CD4-positive, alpha-beta T cell (primary cell): ENCODE measurements at regions of chrX and their contacts with region 1.

Region 1: GRCh38 chrX:49043220-49043986 is at the start of gene TFE3:
- DNase-seq: peak; percentile 87 to 99 (median 93)
- ATAC-seq: peak; percentile 86
- H3K4me3 ChIP-seq: peak within 1 kb of the TSS; percentile 66
- H3K4me3 Mint-ChIP-seq: peak within 1 kb of the TSS; percentile 96
- H3K27ac ChIP-seq: peak within 1 kb of the TSS; percentile 84 to 88
- H3K27ac Mint-ChIP-seq: peak within 1 kb of the TSS; percentile 94
- H3K4me1 ChIP-seq: peaks cover 42% of the 10 kb centered on the region
- H3K4me1 Mint-ChIP-seq: peaks cover 39% of the 10 kb centered on the region
- H3K27me3 ChIP-seq: no peaks in the 10 kb centered on the region
- H3K27me3 Mint-ChIP-seq: no peaks in the 10 kb centered on the region
- CTCF ChIP-seq: peak; percentile 41
- total RNA-seq, gene TFE3: 38.6 to 40.9 TPM

Region 2: GRCh38 chrX:48539345-48540027 is 503.9 kb before region 1 on chrX and contains the start of gene TBC1D25:
- CTCF ChIA-PET with region 1: no interaction called
- POLR2A ChIA-PET with region 1: no interaction called
- intact Hi-C with region 1: no loop called
- DNase-seq: peak; percentile 89 to 99 (median 96)
- ATAC-seq: peak; percentile 87
- H3K4me3 ChIP-seq: peak within 1 kb of the TSS; percentile 74
- H3K4me3 Mint-ChIP-seq: peak within 1 kb of the TSS; percentile 93
- H3K27ac ChIP-seq: peak within 1 kb of the TSS; percentile 84 to 95
- H3K27ac Mint-ChIP-seq: peak within 1 kb of the TSS; percentile 97
- H3K4me1 ChIP-seq: peaks cover 21% of the 10 kb centered on the region
- H3K4me1 Mint-ChIP-seq: peaks cover 20% of the 10 kb centered on the region
- H3K27me3 ChIP-seq: no peaks in the 10 kb centered on the region
- H3K27me3 Mint-ChIP-seq: no peaks in the 10 kb centered on the region
- CTCF ChIP-seq: peak; percentile 30
- total RNA-seq, gene TBC1D25: 26.7 to 30.5 TPM

Region 3: DNA sequence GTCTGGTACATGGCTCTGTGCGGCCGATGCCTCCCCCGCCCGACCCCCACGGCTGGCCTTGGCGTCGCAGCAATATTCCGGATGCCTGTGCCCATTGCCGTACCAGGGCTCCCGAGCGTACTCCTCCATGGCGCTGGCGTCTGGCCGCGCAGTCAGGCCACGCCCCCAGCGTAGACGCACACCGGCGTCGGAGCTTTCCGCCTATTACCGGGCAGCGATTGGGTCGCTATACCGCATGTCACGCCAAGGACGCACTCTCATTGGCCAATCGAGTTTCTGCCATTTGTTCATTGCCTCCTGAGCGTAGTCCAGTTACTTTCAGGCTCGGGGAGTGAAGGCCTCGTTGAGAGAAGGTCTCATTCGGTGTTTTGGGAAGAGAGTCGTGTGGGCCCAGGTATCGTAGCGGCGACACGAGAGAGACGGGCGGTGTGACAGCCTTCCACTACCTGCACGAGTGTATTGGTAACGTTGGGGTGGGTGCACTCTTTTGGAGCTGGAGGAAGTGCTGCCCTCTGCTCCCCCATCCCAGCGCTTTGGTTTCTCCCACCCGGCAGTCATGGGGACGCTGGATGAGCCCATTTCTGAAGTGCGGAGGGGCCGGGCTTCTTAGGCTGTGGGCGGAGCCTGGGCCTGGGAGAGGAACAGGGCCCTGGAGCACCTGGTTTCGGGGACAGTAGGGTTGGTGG is 145.6 kb before region 1 on chrX and contains the starts of genes PQBP1 and TIMM17B:
- CTCF ChIA-PET with region 1: no interaction called
- POLR2A ChIA-PET with region 1: interaction called, 4 read pairs
- intact Hi-C with region 1: loop called (anchors 5 kb)
- DNase-seq: peak; percentile 73 to 96 (median 84)
- ATAC-seq: peak; percentile 84
- H3K4me3 ChIP-seq: peak within 1 kb of the TSS; percentile 91
- H3K4me3 Mint-ChIP-seq: peak within 1 kb of the TSS; percentile 91
- H3K27ac ChIP-seq: peak within 1 kb of the TSS; percentile 93 to 98
- H3K27ac Mint-ChIP-seq: peak within 1 kb of the TSS; percentile 90
- H3K4me1 ChIP-seq: peaks cover 33% of the 10 kb centered on the region
- H3K4me1 Mint-ChIP-seq: peaks cover 27% of the 10 kb centered on the region
- H3K27me3 ChIP-seq: no peaks in the 10 kb centered on the region
- H3K27me3 Mint-ChIP-seq: no peaks in the 10 kb centered on the region
- CTCF ChIP-seq: no peak
- total RNA-seq, gene PQBP1: 73.0 to 76.6 TPM
- total RNA-seq, gene TIMM17B: 40.0 to 40.3 TPM

Region 4: DNA sequence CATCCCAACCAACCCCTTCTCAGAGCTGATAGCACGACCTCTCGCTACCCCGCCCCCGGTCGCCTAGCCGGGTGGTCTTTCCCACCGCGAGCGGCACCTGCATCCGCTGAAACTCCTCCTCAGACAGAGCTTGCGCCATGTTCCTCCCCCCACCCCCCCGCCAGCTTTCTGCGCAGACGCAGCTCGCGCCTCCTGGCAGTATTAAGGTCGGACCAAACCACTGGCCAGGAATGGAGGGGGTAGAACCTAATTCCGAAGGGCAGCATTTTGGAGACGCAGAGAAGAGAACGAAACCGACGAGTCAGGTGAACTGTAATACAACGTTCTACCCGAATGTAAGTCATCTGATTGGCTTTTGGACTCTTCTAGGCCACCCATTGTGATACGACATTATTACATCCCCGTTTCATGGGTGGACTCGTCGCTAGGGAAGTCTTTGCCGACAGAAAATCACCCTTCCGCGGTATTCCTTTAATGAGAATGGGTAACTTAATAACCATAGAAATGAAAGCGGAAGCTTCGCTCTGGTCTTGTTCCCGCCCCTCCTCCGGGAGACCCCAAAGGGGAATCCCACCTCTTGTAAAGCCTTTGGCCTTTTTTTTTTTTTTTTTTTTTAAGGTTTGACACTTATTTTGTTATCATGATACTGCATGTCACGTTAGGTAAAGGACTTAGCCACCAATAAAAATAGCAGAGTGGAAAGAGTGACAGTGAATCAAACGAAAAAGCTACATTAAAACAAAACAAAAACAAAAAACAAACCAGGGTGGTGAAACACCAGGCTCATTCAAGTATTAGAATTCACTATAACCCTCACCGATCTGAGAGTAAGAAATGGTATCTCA is 41.1 kb before region 1 on chrX and contains the start of gene GRIPAP1:
- CTCF ChIA-PET with region 1: no interaction called
- POLR2A ChIA-PET with region 1: interaction called, 30 read pairs
- intact Hi-C with region 1: loop called (anchors 2 kb)
- DNase-seq: peak; percentile 61 to 93 (median 72)
- ATAC-seq: peak; percentile 77
- H3K4me3 ChIP-seq: peak within 1 kb of the TSS; percentile 93
- H3K4me3 Mint-ChIP-seq: peak within 1 kb of the TSS; percentile 96
- H3K27ac ChIP-seq: peak within 1 kb of the TSS; percentile 84 to 96
- H3K27ac Mint-ChIP-seq: peak within 1 kb of the TSS; percentile 98
- H3K4me1 ChIP-seq: peaks cover 27% of the 10 kb centered on the region
- H3K4me1 Mint-ChIP-seq: peaks cover 26% of the 10 kb centered on the region
- H3K27me3 ChIP-seq: no peaks in the 10 kb centered on the region
- H3K27me3 Mint-ChIP-seq: no peaks in the 10 kb centered on the region
- CTCF ChIP-seq: no peak
- total RNA-seq, gene GRIPAP1: 100 to 101 TPM

Region 5: GRCh38 chrX:49067283-49068120 is 24.1 kb after region 1 on chrX:
- CTCF ChIA-PET with region 1: no interaction called
- POLR2A ChIA-PET with region 1: no interaction called
- intact Hi-C with region 1: no loop called
- DNase-seq: no peak
- ATAC-seq: no peak
- H3K4me3 ChIP-seq: no peak overlapping the region
- H3K4me3 Mint-ChIP-seq: no peak overlapping the region
- H3K27ac ChIP-seq: no peak overlapping the region
- H3K27ac Mint-ChIP-seq: no peak overlapping the region
- H3K4me1 ChIP-seq: peaks cover under 1% of the 10 kb centered on the region
- H3K4me1 Mint-ChIP-seq: no peaks in the 10 kb centered on the region
- H3K27me3 ChIP-seq: no peaks in the 10 kb centered on the region
- H3K27me3 Mint-ChIP-seq: no peaks in the 10 kb centered on the region
- CTCF ChIP-seq: no peak

Region 6: GRCh38 chrX:49079489-49080428 is 36.4 kb after region 1 on chrX and contains the start of gene WDR45:
- CTCF ChIA-PET with region 1: interaction called, 3 read pairs
- POLR2A ChIA-PET with region 1: interaction called, 14 read pairs
- intact Hi-C with region 1: loop called (anchors 2 to 5 kb)
- DNase-seq: peak; percentile 38 to 87 (median 67)
- ATAC-seq: peak; percentile 82
- H3K4me3 ChIP-seq: peak within 1 kb of the TSS; percentile 82
- H3K4me3 Mint-ChIP-seq: peak within 1 kb of the TSS; percentile 97
- H3K27ac ChIP-seq: peak within 1 kb of the TSS; percentile 92 to 96
- H3K27ac Mint-ChIP-seq: peak within 1 kb of the TSS; percentile 100
- H3K4me1 ChIP-seq: peaks cover 13% of the 10 kb centered on the region
- H3K4me1 Mint-ChIP-seq: peaks cover 12% of the 10 kb centered on the region
- H3K27me3 ChIP-seq: no peaks in the 10 kb centered on the region
- H3K27me3 Mint-ChIP-seq: no peaks in the 10 kb centered on the region
- CTCF ChIP-seq: no peak
- total RNA-seq, gene WDR45: 74.8 to 78.7 TPM